Mammary epithelial cell (primary cell): ENCODE measurements at regions of chr20 and their contacts with region 1.

Region 1: GRCh38 chr20:14264869-14265268 is 72.5 kb downstream of the FLRT3 start:
- DNase-seq: peak; percentile 9
- H3K4me3 ChIP-seq: no peak overlapping the region
- H3K27ac ChIP-seq: no peak overlapping the region
- H3K4me1 ChIP-seq: peaks cover under 1% of the 10 kb centered on the region
- H3K27me3 ChIP-seq: no peaks in the 10 kb centered on the region
- CTCF ChIP-seq: peak; percentile 28 to 56

Region 2: DNA sequence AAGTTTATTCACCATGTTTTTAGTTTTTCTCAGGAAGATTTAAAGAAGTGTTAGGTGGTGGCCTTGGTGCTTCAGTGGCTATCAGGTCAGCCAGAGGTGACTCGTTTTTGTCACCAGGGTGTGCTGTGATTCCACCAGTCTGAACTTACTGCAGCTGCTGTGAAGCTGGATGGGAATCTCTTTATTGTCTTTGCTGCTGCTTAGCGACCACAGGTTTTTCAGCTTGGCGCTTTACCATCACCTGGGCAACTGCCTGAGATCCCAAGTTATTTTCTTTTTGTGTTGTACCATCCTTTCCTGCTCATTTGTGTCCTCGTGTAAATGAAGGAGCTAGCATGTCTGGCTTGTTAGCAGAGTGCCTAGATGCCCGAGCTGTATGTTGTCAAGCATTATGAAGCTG is 122.7 kb before region 1 on chr20:
- CTCF ChIA-PET with region 1: no interaction called
- dilution Hi-C with region 1: no loop called
- in situ Hi-C with region 1: no loop called
- intact Hi-C with region 1: loop called (anchors 1 kb)
- DNase-seq: peak; percentile 66
- H3K4me3 ChIP-seq: no peak overlapping the region
- H3K27ac ChIP-seq: no peak overlapping the region
- H3K4me1 ChIP-seq: peaks cover 6% of the 10 kb centered on the region
- H3K27me3 ChIP-seq: no peaks in the 10 kb centered on the region
- CTCF ChIP-seq: peak; percentile 70 to 78

Region 3: DNA sequence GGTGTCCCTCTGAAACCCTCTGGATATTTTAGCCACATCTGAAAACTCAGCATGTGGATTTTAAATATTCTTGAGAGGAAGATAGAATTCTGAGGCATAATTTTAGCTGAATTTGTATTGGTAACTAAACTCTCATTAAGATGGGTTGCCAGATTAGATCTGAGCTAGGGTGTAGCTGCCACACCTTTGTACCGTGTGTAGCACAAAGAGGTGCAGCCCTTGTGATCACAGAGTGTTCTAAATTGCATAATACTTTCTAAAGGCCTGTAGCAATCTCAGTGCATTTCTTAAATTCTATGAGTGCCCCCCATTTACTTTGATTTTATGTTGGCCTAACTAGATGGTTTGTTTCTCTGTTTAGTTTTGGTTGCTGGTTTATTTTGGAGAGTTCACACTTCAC is 19.6 kb after region 1 on chr20:
- CTCF ChIA-PET with region 1: no interaction called
- dilution Hi-C with region 1: no loop called
- in situ Hi-C with region 1: no loop called
- intact Hi-C with region 1: no loop called
- DNase-seq: peak; percentile 48
- H3K4me3 ChIP-seq: no peak overlapping the region
- H3K27ac ChIP-seq: peak overlapping the region; percentile 96
- H3K4me1 ChIP-seq: peaks cover 42% of the 10 kb centered on the region
- H3K27me3 ChIP-seq: no peaks in the 10 kb centered on the region
- CTCF ChIP-seq: no peak